ENCODE measurements at regions of chr2 and their contacts with region 1.

Region 1: DNA sequence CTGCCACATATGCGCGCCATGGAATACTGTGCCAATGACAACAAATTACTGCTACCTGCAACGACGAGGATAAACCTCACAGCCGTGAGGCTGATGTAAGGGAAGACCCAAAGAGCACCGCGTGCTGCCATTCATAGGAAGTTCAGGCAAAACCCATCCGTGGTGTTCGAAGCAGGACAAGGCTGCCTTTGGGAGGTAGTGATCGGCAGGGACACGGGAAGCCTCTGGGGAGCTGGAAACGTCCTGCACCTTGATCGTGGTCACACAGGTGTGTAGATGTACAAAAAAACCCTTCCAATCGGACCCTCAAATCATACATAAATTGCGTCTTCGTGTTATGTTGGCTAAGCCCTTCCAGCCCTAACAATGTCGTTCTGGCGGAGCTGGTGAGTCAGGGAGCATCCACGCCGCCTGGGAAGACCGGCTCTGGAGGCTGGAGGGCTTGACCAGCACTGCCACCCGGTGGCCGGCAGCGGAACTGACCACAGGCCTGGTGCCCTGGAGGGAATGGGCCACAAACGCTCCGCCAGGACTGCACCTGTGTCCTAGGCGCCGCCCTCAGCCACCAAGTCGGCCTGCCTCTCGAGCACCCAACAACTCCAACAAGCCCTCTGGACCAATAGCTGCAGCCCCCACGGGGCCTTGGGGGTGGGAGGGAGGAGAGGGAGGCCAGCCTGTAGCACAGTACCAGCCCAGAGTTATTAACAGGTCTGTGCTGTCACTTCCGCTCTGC is 4.1 kb upstream of the NEURL3 start:
- H3K4me3 ChIP-seq: no peak overlapping the region
- H3K27ac ChIP-seq: no peak overlapping the region
- H3K4me1 ChIP-seq: no peaks in the 10 kb centered on the region
- CTCF ChIP-seq: peak; percentile 95

Region 2: DNA sequence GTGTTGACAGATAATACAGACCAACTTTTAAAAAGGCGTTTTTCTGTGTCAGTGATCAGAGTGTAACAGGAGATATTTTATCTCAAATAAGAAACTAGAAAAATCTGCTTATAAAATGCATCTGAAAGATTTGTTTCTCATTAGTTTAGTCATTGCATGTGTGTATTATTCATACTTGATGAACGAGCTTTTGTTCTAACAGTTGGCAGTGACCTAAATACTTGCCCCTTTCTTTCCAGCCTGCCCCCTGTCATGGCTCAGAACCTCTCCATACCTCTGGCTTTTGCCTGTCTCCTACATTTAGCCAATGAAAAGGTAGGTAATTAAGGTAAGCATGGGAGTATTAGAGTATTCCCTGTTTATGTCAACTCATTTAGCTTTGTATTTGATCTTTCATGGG is 140.1 kb before region 1 on chr2:
- CTCF ChIA-PET with region 1: interaction called, 10 read pairs
- POLR2A ChIA-PET with region 1: no interaction called
- H3K4me3 ChIP-seq: no peak overlapping the region
- H3K27ac ChIP-seq: no peak overlapping the region
- H3K4me1 ChIP-seq: peaks cover 6% of the 10 kb centered on the region
- CTCF ChIP-seq: no peak

Region 3: GRCh38 chr2:96407041-96407918 is 102.0 kb before region 1 on chr2:
- CTCF ChIA-PET with region 1: interaction called, 113 read pairs
- POLR2A ChIA-PET with region 1: interaction called, 6 read pairs
- H3K4me3 ChIP-seq: no peak overlapping the region
- H3K27ac ChIP-seq: no peak overlapping the region
- H3K4me1 ChIP-seq: peaks cover 8% of the 10 kb centered on the region
- CTCF ChIP-seq: peak; percentile 80

Region 4: DNA sequence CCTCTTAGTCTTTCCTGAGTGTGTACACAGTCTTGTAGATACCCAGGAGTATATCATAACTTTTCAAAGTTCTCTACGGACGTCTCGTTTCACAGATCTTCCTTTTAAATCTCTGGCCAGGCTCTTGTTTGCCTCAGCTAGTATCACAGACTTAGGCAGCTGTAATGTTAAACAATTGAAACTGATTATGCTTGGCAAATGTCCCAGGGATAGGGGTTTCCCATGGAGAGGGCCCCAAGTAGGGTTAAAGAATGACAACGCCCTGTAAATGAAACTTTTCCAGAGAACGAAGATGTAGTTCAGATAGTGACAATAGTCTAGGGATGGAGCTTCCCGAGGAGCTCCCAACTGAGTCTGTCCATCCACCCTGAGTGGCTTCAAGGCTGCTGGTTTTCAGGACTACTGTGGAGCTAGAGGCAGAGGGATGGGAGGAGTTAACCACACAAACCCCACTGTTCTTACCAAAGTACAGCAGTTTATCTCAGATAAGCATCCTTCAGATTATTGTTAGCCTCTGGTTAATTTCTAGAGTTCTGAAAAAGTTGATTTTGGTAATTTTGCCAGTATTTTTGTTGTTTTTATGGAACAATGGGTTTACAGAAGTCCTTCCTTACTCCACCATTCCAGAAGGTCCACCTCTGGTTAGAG is 13.2 kb before region 1 on chr2:
- CTCF ChIA-PET with region 1: interaction called, 14 read pairs
- POLR2A ChIA-PET with region 1: no interaction called
- H3K4me3 ChIP-seq: no peak overlapping the region
- H3K27ac ChIP-seq: no peak overlapping the region
- H3K4me1 ChIP-seq: no peaks in the 10 kb centered on the region
- CTCF ChIP-seq: no peak

Region 5: DNA sequence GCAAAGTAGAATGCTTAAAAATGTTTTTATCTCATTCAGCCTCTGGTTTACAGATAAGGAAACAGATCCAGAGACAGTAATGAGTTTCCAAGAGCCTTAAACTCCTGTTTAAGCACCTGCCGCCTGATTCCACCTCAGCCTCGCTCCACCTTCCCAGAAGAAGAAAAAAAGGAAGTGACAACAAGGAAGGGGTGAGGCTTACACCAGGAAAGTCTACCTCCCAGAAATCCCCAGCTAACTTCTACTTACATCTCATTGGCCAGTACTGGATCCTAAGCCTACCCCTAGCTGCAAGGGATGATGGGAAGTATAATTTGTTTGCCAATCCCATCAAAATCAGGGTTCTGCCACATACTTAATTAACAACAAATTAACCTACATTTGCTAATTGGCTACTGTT is 11.9 kb after region 1 on chr2:
- CTCF ChIA-PET with region 1: interaction called, 13 read pairs
- POLR2A ChIA-PET with region 1: no interaction called
- H3K4me3 ChIP-seq: no peak overlapping the region
- H3K27ac ChIP-seq: no peak overlapping the region
- H3K4me1 ChIP-seq: no peaks in the 10 kb centered on the region
- CTCF ChIP-seq: no peak

Region 6: DNA sequence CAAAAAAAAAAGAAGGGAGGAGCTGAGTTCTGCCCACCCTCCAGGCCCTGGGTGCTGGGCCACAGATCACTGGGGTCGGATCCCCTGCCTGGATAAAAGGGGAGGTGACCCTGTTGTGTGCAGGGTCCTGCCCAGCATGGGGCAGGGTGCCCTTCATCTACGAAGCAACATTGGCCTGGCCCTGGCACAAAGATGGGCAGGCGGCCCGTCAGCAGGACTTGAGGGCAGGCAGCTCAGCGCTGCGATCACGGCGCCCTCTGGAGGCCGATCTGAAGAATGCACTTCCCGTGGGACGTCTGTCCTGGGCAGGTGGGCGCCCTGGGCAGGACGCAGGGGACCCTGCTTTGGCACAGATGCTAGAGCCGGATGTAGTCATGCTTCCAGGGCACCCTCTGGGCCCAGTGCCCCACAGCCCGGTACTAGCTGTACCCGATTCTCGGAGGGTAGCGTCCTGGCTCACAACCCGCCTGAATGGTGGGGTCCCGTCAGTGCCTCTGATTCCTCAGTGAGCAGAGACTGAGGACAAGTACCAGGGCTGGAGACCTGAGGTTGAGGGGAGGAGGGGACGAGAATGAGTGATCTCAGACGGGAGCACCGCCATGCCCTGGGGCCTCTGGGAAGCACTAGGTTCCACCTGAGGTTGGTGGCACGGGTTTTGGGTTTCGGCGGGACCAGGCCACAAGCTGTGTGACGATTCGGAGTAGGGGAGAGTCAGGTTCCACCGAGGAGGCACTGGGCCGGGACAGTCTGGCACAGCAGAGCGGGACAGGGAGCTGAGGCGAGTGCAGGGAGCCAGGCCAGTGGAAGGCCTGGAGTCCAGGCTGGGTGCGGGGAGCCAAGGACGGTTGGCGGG is 45.2 kb after region 1 on chr2:
- CTCF ChIA-PET with region 1: interaction called, 24 read pairs
- POLR2A ChIA-PET with region 1: interaction called, 5 read pairs
- H3K4me3 ChIP-seq: no peak overlapping the region
- H3K27ac ChIP-seq: no peak overlapping the region
- H3K4me1 ChIP-seq: no peaks in the 10 kb centered on the region
- CTCF ChIP-seq: peak; percentile 92

Region 7: DNA sequence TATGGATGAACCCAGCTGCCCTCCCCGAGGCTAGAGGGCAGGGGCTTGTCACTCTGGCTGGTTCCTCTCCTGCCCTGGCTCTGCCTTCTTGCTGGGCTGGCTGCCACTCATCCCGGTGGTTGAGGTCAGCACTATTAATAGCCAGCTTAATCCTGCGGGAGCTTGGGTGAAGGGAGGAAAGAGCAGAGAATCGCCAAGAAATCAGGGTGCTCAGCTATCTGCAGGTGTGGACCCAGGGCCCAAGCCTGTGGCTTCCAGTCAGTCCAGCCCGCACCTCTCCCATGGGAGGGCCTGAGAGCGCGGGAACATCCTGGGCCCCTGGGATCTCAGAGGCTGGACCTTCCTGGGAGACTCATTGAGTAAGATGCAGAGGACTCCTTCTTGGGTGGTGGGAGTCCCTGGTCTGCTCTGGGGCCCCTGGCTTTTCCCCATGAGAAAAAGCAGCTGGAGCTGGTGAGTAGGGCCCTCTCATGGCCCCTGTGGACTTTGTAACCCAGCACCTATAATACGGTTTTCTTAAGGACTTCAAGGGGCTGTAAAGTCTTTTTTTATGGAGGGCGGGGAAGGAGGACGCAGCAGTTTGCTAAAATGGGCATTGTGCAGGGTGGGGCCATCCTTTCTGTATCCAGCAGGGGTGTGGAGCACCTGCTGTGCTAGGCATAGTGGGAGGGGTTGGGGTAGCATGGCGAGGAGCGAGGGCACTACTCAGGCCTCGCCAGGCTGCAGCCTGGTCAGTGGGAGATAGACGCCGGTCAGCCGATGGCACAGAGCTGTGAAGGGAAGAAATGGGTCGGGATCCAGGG is 279.4 kb after region 1 on chr2:
- CTCF ChIA-PET with region 1: no interaction called
- POLR2A ChIA-PET with region 1: no interaction called
- H3K4me3 ChIP-seq: no peak overlapping the region
- H3K27ac ChIP-seq: peak overlapping the region; percentile 28; the same call in 1 of the 2 replicates
- H3K4me1 ChIP-seq: peaks cover 14% of the 10 kb centered on the region
- CTCF ChIP-seq: 0 out of 2 replicates have a peak, but pooled peaks have one; percentile 12

Measured in HEK293 (cell line).